CD14-positive monocyte (primary cell): ENCODE measurements at regions of chr19 and their contacts with region 1.

Region 1: DNA sequence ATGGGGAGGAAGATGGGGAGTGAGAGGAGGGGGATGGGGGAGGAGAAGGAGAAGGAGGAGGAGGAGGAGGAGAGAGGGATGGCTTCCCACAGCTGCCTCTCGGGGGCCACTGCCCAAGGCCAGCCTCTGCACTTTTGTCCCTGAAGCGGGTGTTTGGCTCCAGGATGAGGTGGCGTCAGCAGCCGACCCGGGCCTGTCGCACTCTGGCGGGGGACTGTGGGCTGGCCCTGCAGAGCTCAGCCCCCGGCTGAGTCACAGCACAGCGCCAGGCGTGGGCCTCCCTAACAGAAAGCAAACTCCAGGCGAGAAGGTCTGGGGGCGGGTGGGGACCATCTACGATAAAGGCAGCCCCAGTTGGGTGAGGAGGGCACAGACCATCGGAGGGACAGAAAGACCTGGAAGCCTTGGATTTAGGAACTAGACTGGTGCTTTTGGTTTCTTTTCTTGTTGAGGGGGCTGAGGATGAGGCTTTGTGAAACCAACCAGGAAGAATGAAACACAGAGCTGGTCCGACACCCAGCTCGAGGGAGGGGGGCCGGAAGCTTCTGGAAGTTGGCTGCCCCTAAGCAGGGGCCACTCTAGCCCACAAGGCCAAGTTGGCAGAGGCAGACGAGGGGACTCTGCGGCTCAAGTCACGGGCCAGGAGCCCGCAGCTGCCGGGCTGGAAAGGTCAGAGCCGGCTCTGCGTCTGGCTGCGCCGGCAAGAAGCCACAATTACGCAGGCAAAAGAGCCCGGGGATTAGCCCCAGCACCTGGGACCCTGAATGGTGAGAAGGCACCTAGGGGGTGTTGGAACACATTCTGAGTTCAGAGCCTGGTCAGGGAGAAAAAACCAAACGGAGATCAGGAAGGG is 18.2 kb downstream of the LSM4 start:
- DNase-seq: peak; percentile 84 to 86 (median 85)
- H3K4me3 ChIP-seq: peak overlapping the region; percentile 38 to 76 (median 45)
- H3K4me3 Mint-ChIP-seq: peak overlapping the region; percentile 88 to 92
- H3K27ac ChIP-seq: peak overlapping the region; percentile 87 to 98
- H3K27ac Mint-ChIP-seq: peak overlapping the region; percentile 97 to 100 (median 99)
- H3K4me1 ChIP-seq: peaks cover 50 to 57% of the 10 kb centered on the region in 2 donors
- H3K4me1 Mint-ChIP-seq: peaks cover 42% of the 10 kb centered on the region
- H3K27me3 ChIP-seq: no peaks in the 10 kb centered on the region
- H3K27me3 Mint-ChIP-seq: no peaks in the 10 kb centered on the region
- CTCF ChIP-seq: no peak

Region 2: DNA sequence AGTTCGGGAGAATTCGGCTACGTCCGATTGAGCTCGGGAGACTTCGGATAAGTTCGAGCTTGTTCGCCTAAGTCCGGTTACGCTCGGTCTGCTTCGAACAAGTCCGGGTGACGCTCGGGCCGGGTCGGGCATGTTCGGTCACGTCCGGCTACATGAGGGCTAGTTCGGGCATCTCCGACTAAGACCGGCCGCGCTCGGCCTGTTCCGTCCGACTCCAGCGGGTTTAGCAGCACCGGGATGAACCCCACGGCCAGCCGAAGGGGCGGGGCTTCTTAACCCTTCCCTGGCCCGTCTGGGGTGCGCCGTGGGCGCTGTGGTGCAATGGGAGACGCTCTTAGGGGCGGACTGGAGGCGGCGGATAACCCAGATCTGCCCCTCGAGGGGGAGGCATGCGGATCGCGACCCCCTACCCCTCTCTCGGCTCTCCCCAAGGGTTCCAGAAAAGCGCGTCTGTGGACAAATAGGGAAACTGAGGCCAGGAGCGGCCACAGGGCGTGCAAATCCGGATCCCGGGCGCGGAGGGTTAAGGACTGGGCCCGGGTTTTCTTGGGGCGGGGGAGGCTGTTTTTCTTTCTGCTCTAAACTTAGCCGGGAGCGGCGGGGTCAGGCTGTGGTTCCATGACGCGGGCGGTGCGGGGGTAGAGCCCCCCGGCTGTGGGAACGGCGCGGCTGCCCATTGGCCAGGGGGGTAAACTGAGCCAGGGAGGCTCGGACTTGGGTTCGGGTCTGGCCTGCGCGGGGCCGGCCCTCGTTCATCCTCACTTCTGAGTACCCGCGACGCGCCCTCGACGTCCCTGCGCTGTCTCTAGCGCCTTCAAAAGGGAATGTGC is 79.9 kb before region 1 on chr19:
- intact Hi-C with region 1: no loop called
- DNase-seq: peak; percentile 96 to 97 (median 96)
- H3K4me3 ChIP-seq: peak overlapping the region; percentile 36 to 88 (median 62)
- H3K4me3 Mint-ChIP-seq: peak overlapping the region; percentile 90 to 95
- H3K27ac ChIP-seq: peak overlapping the region; percentile 51 to 74
- H3K27ac Mint-ChIP-seq: peak overlapping the region; percentile 81 to 96 (median 86)
- H3K4me1 ChIP-seq: peaks cover 14 to 22% of the 10 kb centered on the region in 2 donors
- H3K4me1 Mint-ChIP-seq: peaks cover 23% of the 10 kb centered on the region
- H3K27me3 ChIP-seq: peaks cover 18 to 52% of the 10 kb centered on the region in 2 donors
- H3K27me3 Mint-ChIP-seq: peaks cover 50 to 73% (median 66%) of the 10 kb centered on the region in 3 donors
- CTCF ChIP-seq: no peak

Region 3: DNA sequence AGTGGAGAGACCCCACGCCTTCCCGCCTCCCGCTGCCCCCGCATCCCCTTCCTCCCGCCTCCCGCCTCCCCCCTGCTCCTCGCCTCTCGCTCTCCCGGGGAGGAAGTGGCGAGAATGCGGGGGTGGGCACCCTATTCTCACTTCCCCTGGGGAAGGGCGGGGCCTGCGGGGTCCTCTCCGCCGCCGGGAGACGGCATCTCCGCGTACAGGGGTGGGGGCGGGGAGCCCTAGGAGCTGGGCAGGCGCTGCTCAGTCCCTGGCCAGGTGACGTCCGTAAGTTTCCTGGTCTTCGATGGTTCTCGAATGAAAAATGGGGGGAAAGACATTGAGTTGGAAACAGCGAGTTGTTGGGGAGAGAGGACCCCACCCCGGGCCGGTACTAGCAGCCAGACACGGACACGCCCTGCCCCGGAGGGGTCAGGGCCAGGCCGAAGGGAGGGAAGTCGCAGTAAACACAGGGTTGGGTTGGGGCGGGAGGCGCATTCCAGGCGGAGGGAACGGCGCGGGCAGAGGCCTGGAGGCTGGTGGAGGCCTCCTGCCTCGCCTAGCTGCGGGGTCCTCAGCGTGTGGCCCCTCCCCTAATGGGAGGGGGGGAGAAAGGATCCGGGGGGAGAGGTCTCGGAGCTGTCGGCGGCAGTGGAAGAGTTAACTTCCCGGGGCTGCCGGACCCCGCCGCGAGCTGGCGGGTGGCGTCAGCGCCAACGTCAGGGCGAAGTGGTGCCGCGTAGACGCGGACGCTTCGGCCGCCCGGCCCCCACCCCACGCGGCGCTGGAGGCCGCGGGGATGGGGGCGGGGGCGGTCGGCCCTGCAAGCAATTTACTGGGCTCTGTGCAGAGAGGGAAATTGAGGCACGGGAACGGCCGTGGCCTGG is 12.9 kb before region 1 on chr19:
- intact Hi-C with region 1: loop called in 1 of 2 experiments (anchors 1 kb)
- DNase-seq: peak; percentile 80 to 90 (median 86)
- H3K4me3 ChIP-seq: peak overlapping the region; percentile 62 to 94 (median 92)
- H3K4me3 Mint-ChIP-seq: peak overlapping the region; percentile 87 to 92
- H3K27ac ChIP-seq: peak overlapping the region; percentile 99 to 100
- H3K27ac Mint-ChIP-seq: peak overlapping the region; percentile 97 to 100 (median 99)
- H3K4me1 ChIP-seq: peaks cover 41 to 50% of the 10 kb centered on the region in 2 donors
- H3K4me1 Mint-ChIP-seq: peaks cover 40% of the 10 kb centered on the region
- H3K27me3 ChIP-seq: no peaks in the 10 kb centered on the region
- H3K27me3 Mint-ChIP-seq: peaks cover 0 to 2% (median 0%) of the 10 kb centered on the region in 3 donors
- CTCF ChIP-seq: no peak